ENCODE measurements at regions of chr12 and their contacts with region 1.

Region 1: GRCh38 chr12:111396726-111397445 is 8.8 kb upstream of the SH2B3 start:
- DNase-seq: peak; percentile 85 to 91 (median 87)
- ATAC-seq: peak; percentile 91
- H3K4me3 ChIP-seq: 0 out of 2 replicates have a peak overlapping the region, but pooled peaks have one; percentile 19
- H3K27ac ChIP-seq: peak overlapping the region; percentile 61
- H3K4me1 ChIP-seq: peaks cover 25 to 31% of the 10 kb centered on the region in 2 experiments; a peak in 4 of 5 replicates
- H3K27me3 ChIP-seq: no peaks in the 10 kb centered on the region
- CTCF ChIP-seq: peak; percentile 99 to 100 (median 99)
- EP300 ChIP-seq: peak; percentile 31; the same call in 1 of the 2 replicates
- POLR2A ChIP-seq: no peak
- RAD21 ChIP-seq: peak; percentile 97 to 98

Region 2: DNA sequence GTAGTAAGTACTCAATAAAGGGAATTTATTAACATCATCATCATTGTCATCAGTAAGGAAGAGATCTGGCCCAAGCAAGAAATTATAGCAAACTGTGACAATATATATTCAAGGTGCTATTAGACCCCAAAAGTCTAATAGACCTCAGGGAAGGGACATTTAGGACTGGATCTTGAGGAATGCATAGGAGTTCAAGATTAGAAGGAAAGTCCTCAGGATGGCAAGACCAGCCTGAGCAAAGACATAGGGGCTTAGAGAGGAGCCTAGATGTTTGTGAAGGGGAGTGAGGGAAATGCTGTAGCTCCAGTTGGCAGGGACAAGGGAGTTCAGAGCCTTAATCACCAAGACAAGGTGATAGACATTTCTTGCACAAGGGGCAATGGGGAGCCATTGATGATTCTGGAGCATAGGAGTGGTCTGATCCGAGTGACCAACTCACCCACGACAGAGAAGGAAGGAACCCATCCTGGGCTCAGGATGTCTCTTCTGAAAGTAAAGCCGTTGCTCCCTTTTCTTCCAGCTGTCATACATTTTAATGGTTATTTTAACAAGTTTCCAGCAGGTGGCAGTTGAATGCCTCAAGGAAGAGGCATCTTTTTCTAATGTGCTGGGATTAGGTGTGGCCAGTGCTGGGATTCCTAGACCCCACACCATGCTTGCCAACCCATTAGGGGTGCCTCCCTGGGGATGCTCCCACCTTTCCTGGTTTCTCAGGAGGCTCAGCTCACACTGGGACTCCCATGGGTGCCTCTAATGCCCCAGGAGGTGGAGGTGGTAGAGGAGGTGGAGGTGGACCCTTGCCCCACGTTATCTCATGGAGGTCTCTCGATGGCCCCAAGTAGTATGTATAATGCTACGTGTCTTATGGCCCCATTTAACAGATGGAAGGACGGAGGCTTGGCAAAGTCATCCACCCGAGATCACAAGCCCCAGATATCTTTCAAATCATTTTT is 65.8 kb before region 1 on chr12:
- CTCF ChIA-PET with region 1: no interaction called
- POLR2A ChIA-PET with region 1: no interaction called
- in situ Hi-C with region 1: no loop called
- intact Hi-C with region 1: loop called (anchors 5 kb)
- DNase-seq: peak; percentile 40 to 68 (median 50)
- ATAC-seq: peak; percentile 87
- H3K4me3 ChIP-seq: no peak overlapping the region
- H3K27ac ChIP-seq: no peak overlapping the region
- H3K4me1 ChIP-seq: no peaks in the 10 kb centered on the region; a peak in 1 of 5 replicates
- H3K27me3 ChIP-seq: peaks cover 18 to 64% of the 10 kb centered on the region in 2 experiments; a peak in 4 of 5 replicates
- CTCF ChIP-seq: peak; percentile 59 to 75 (median 71)
- EP300 ChIP-seq: no peak
- POLR2A ChIP-seq: no peak
- RAD21 ChIP-seq: peak; percentile 50 to 70

Region 3: GRCh38 chr12:111451649-111452129 is 54.8 kb after region 1 on chr12:
- CTCF ChIA-PET with region 1: interaction called, 54 read pairs
- POLR2A ChIA-PET with region 1: interaction called, 7 read pairs
- in situ Hi-C with region 1: no loop called
- intact Hi-C with region 1: loop called (anchors 1 kb)
- DNase-seq: peak in 3 of 4 experiments; percentile 36 to 63 (median 46)
- ATAC-seq: peak; percentile 32
- H3K4me3 ChIP-seq: no peak overlapping the region
- H3K27ac ChIP-seq: no peak overlapping the region
- H3K4me1 ChIP-seq: peaks cover 0 to 10% of the 10 kb centered on the region in 2 experiments; a peak in 2 of 5 replicates
- H3K27me3 ChIP-seq: no peaks in the 10 kb centered on the region
- CTCF ChIP-seq: peak; percentile 70 to 88 (median 80); a peak in 5 of 6 replicates
- EP300 ChIP-seq: no peak
- POLR2A ChIP-seq: peak; percentile 12
- RAD21 ChIP-seq: peak; percentile 77 to 80

Region 4: GRCh38 chr12:111529424-111530368 is 132.8 kb after region 1 on chr12:
- CTCF ChIA-PET with region 1: interaction called, 16 read pairs
- POLR2A ChIA-PET with region 1: no interaction called
- in situ Hi-C with region 1: no loop called
- intact Hi-C with region 1: loop called (anchors 1 kb)
- DNase-seq: peak; percentile 75 to 80 (median 76)
- ATAC-seq: peak; percentile 92
- H3K4me3 ChIP-seq: no peak overlapping the region
- H3K27ac ChIP-seq: no peak overlapping the region
- H3K4me1 ChIP-seq: no peaks in the 10 kb centered on the region
- H3K27me3 ChIP-seq: no peaks in the 10 kb centered on the region
- CTCF ChIP-seq: peak; percentile 67 to 76 (median 68)
- EP300 ChIP-seq: no peak
- POLR2A ChIP-seq: no peak
- RAD21 ChIP-seq: peak; percentile 37 to 68; a peak in 3 of 4 replicates

Region 5: GRCh38 chr12:111673503-111673902 is 276.6 kb after region 1 on chr12:
- CTCF ChIA-PET with region 1: interaction called, 18 read pairs
- POLR2A ChIA-PET with region 1: interaction called, 3 read pairs
- in situ Hi-C with region 1: no loop called
- intact Hi-C with region 1: loop called (anchors 2 kb)
- DNase-seq: peak; percentile 30 to 54 (median 48)
- ATAC-seq: peak; percentile 85
- H3K4me3 ChIP-seq: no peak overlapping the region
- H3K27ac ChIP-seq: peak overlapping the region; percentile 38; the same call in 1 of the 3 replicates
- H3K4me1 ChIP-seq: no peaks in the 10 kb centered on the region
- H3K27me3 ChIP-seq: no peaks in the 10 kb centered on the region
- CTCF ChIP-seq: peak; percentile 47 to 74 (median 59)
- EP300 ChIP-seq: no peak
- POLR2A ChIP-seq: no peak
- RAD21 ChIP-seq: peak; percentile 59 to 64

Region 6: DNA sequence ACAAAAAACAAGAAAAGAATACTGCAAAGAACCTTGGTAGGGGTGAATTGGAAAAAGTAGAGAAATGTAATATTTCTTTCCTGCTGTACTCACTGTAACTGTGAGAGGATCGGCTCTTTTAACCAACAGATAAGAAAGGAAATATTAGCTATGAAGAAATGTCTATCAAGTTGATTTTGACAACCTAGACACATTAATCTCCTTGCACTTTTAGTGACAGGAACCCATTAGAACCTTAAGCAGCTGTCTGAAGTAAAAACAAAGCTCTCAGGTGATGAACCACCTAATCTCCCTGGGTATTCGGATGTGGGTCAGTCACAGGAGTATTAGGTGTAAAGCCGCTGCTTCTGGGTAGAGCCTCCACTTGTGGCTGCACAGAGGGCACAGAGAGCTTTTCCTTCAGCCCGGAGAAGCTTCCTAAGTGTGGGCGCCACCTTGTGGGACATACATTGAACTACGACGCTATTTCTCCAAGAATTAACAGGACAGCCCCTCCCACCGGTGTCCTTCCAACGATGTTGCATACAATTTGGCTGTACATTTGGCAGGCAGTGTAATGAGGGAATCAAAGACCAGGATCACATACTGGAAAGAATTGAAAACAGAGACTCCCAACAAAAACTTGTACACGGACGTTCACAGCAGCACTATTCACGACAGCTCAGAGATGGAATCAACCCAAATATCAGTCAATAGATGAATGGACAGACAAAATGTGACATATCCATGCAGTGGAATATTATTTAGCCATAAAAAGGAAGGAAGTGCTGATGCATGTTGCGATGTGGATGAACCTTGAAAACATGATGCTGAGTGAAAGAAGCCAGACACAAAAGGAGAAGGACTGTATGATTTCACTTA is 416.2 kb after region 1 on chr12:
- CTCF ChIA-PET with region 1: no interaction called
- POLR2A ChIA-PET with region 1: no interaction called
- in situ Hi-C with region 1: no loop called
- intact Hi-C with region 1: loop called (anchors 2 kb)
- DNase-seq: peak; percentile 84 to 89 (median 84)
- ATAC-seq: peak; percentile 97
- H3K4me3 ChIP-seq: no peak overlapping the region
- H3K27ac ChIP-seq: no peak overlapping the region
- H3K4me1 ChIP-seq: no peaks in the 10 kb centered on the region; a peak in 2 of 5 replicates
- H3K27me3 ChIP-seq: peaks cover 0 to 4% of the 10 kb centered on the region in 2 experiments; a peak in 1 of 5 replicates
- CTCF ChIP-seq: peak; percentile 88 to 96 (median 93)
- EP300 ChIP-seq: no peak
- POLR2A ChIP-seq: no peak
- RAD21 ChIP-seq: peak; percentile 87 to 96